Panc1 (cell line): ENCODE measurements at regions of chr10 and their contacts with region 1.

Region 1: GRCh38 chr10:26821699-26822570 is 38.8 kb downstream of the ABI1 start:
- DNase-seq: no peak
- ATAC-seq: no peak
- H3K4me3 ChIP-seq: no peak overlapping the region
- H3K27ac ChIP-seq: no peak overlapping the region
- H3K4me1 ChIP-seq: no peaks in the 10 kb centered on the region
- H3K27me3 ChIP-seq: no peaks in the 10 kb centered on the region
- CTCF ChIP-seq: no peak

Region 2: GRCh38 chr10:26721561-26721960 is 100.4 kb before region 1 on chr10:
- CTCF ChIA-PET with region 1: no interaction called
- POLR2A ChIA-PET with region 1: no interaction called
- in situ Hi-C with region 1: no loop called
- intact Hi-C with region 1: no loop called
- DNase-seq: no peak
- ATAC-seq: no peak
- H3K4me3 ChIP-seq: no peak overlapping the region
- H3K27ac ChIP-seq: no peak overlapping the region
- H3K4me1 ChIP-seq: no peaks in the 10 kb centered on the region
- H3K27me3 ChIP-seq: no peaks in the 10 kb centered on the region
- CTCF ChIP-seq: no peak

Region 3: DNA sequence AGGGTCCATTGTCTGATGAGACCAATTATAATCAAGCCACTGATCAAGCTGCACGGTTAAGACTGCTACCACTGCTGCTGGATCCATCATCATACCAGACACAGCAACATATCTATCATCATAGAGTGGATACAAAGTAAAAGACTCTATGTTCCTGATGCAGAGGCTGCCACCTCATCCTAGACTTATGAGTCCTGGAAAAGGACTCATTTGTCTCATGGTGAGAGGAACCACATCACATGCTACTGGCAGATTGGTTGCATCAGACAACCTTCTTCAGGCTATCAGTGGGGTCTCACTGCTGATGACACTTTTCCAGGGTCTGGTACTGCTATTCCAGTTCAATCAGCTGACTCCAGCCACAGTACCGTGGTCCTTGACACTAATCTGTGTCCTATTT is 40.1 kb before region 1 on chr10:
- CTCF ChIA-PET with region 1: no interaction called
- POLR2A ChIA-PET with region 1: interaction called, 10 read pairs
- in situ Hi-C with region 1: no loop called
- intact Hi-C with region 1: no loop called
- DNase-seq: no peak
- ATAC-seq: no peak
- H3K4me3 ChIP-seq: no peak overlapping the region
- H3K27ac ChIP-seq: peak overlapping the region; percentile 29; the same call in 1 of the 2 replicates
- H3K4me1 ChIP-seq: peaks cover 11% of the 10 kb centered on the region
- H3K27me3 ChIP-seq: no peaks in the 10 kb centered on the region
- CTCF ChIP-seq: no peak

Region 4: DNA sequence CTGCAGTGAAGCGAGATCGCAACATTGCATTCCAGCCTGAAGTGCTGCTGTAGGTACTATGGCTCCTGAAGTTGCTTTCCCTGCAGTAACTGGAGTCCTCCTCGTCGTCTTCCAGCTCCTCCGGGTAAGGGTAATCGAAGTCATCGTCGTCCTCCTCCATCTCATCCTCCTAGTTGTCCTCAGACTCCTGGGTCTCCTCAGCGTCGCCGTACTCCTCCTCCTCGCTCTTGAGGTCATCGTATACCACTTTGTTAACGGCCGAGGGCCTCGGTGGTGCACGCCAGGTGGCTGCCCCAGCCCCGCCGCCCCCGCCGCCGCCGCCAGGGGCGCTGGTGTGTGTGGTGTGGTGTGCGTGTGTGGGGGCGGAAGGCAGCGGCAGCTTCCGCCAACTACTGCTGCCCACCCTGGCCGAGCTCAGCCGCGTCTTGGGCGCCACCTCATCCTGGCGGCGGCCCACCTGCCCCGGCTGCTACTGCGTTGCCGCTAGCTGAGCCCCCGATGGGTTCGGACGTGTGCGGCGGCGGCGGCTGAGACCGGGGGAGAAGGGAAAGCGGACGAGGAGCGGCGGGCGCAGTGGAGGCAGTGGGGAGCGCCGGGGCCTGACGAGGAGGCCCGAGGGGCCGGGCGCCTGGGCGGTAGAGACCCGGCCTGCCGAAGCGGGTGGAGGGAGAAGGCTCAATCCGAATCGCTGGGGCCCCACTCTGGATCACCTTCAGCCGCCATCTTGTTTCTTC is 430.5 kb after region 1 on chr10:
- CTCF ChIA-PET with region 1: no interaction called
- POLR2A ChIA-PET with region 1: no interaction called
- in situ Hi-C with region 1: no loop called
- intact Hi-C with region 1: no loop called
- DNase-seq: no peak
- ATAC-seq: peak; percentile 99
- H3K4me3 ChIP-seq: peak overlapping the region; percentile 50 to 60
- H3K27ac ChIP-seq: peak overlapping the region; percentile 70
- H3K4me1 ChIP-seq: no peaks in the 10 kb centered on the region
- H3K27me3 ChIP-seq: no peaks in the 10 kb centered on the region
- CTCF ChIP-seq: peak; percentile 91